H1 (cell line): ENCODE measurements at regions of chr7 and their contacts with region 1.

Region 1: DNA sequence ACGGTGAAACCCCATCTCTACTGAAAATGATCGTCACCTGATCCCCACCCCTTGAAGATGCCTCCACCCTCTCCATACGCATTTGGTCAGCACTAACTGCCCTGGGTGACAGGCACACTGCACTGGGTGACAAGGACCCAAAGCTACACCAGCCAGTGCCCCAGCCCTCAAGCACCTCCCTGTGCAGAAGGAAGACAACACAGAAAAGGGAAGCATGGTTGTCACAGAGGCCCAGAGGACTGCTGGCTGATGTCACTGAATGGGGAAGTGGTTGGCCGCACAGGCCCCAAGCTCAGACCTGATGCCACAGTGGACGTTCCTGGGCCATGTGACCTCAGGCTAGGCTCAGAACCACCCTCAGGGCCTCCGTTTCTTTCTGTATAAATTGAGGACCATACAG is 4.2 kb upstream of the PILRA start:
- DNase-seq: no peak
- H3K4me3 ChIP-seq: no peak overlapping the region
- H3K27ac ChIP-seq: no peak overlapping the region
- H3K4me1 ChIP-seq: peaks cover 0 to 28% (median 16%) of the 10 kb centered on the region in 4 experiments; a peak in 6 of 7 replicates
- H3K27me3 ChIP-seq: no peaks in the 10 kb centered on the region
- CTCF ChIP-seq: no peak
- EP300 ChIP-seq: no peak
- POLR2A ChIP-seq: peak in 1 of 2 experiments; percentile 47; a peak in 1 of 3 replicates
- RAD21 ChIP-seq: no peak

Region 2: GRCh38 chr7:100358027-100358865 is 10.9 kb before region 1 on chr7 and contains the start of gene PILRB:
- CTCF ChIA-PET with region 1: interaction called, 3 read pairs
- POLR2A ChIA-PET with region 1: interaction called, 12 read pairs
- DNase-seq: no peak
- H3K4me3 ChIP-seq: no peak within 1 kb of the TSS
- H3K27ac ChIP-seq: no peak within 1 kb of the TSS
- H3K4me1 ChIP-seq: no peaks in the 10 kb centered on the region
- H3K27me3 ChIP-seq: no peaks in the 10 kb centered on the region
- CTCF ChIP-seq: no peak
- EP300 ChIP-seq: no peak
- POLR2A ChIP-seq: no peak
- RAD21 ChIP-seq: peak; percentile 16 to 23; a peak in 2 of 4 replicates
- total RNA-seq, gene PILRB: 32.2 and 34.4 TPM in 2 replicates

Region 3: GRCh38 chr7:100380196-100380595 is 11.1 kb after region 1 on chr7:
- CTCF ChIA-PET with region 1: interaction called, 3 read pairs
- POLR2A ChIA-PET with region 1: interaction called, 21 read pairs
- DNase-seq: no peak
- H3K4me3 ChIP-seq: no peak overlapping the region
- H3K27ac ChIP-seq: no peak overlapping the region
- H3K4me1 ChIP-seq: no peaks in the 10 kb centered on the region
- H3K27me3 ChIP-seq: no peaks in the 10 kb centered on the region; a peak in 2 of 7 replicates
- CTCF ChIP-seq: no peak
- EP300 ChIP-seq: no peak
- POLR2A ChIP-seq: no peak
- RAD21 ChIP-seq: no peak

Region 4: GRCh38 chr7:100611974-100612729 is 243.0 kb after region 1 on chr7 and contains the start of gene MOSPD3:
- CTCF ChIA-PET with region 1: no interaction called
- POLR2A ChIA-PET with region 1: no interaction called
- DNase-seq: peak; percentile 98 to 99
- H3K4me3 ChIP-seq: peak within 1 kb of the TSS; percentile 74 to 83 (median 76)
- H3K27ac ChIP-seq: peak within 1 kb of the TSS; percentile 98
- H3K4me1 ChIP-seq: peaks cover 0 to 6% (median 2%) of the 10 kb centered on the region in 4 experiments; a peak in 3 of 7 replicates
- H3K27me3 ChIP-seq: no peaks in the 10 kb centered on the region; a peak in 1 of 7 replicates
- CTCF ChIP-seq: no peak
- EP300 ChIP-seq: no peak
- POLR2A ChIP-seq: peak in 1 of 2 experiments; percentile 93; a peak in 2 of 3 replicates
- RAD21 ChIP-seq: no peak
- total RNA-seq, gene MOSPD3: 19.3 and 20.7 TPM in 2 replicates